Caco-2 (cell line): ENCODE measurements at regions of chrX and their contacts with region 1.

Region 1: GRCh38 chrX:132367984-132368756 is 120.7 kb downstream of the MBNL3 start:
- DNase-seq: peak; percentile 70 to 76
- H3K4me3 ChIP-seq: no peak overlapping the region
- H3K4me3 Mint-ChIP-seq: peak overlapping the region; percentile 20
- H3K27ac Mint-ChIP-seq: peak overlapping the region; percentile 85
- H3K4me1 ChIP-seq: peaks cover 50% of the 10 kb centered on the region
- H3K4me1 Mint-ChIP-seq: peaks cover 34% of the 10 kb centered on the region
- H3K27me3 ChIP-seq: no peaks in the 10 kb centered on the region
- H3K27me3 Mint-ChIP-seq: no peaks in the 10 kb centered on the region
- CTCF ChIP-seq: no peak

Region 2: GRCh38 chrX:132393992-132394391 is 25.8 kb after region 1 on chrX:
- CTCF ChIA-PET with region 1: no interaction called
- POLR2A ChIA-PET with region 1: interaction called, 4 read pairs
- intact Hi-C with region 1: loop called (anchors 1 kb)
- DNase-seq: no peak
- H3K4me3 ChIP-seq: no peak overlapping the region
- H3K4me3 Mint-ChIP-seq: no peak overlapping the region
- H3K27ac Mint-ChIP-seq: peak overlapping the region; percentile 53
- H3K4me1 ChIP-seq: peaks cover 34% of the 10 kb centered on the region
- H3K4me1 Mint-ChIP-seq: peaks cover 23% of the 10 kb centered on the region
- H3K27me3 ChIP-seq: no peaks in the 10 kb centered on the region
- H3K27me3 Mint-ChIP-seq: no peaks in the 10 kb centered on the region
- CTCF ChIP-seq: no peak

Region 3: GRCh38 chrX:132442691-132443090 is 74.5 kb after region 1 on chrX:
- CTCF ChIA-PET with region 1: no interaction called
- POLR2A ChIA-PET with region 1: no interaction called
- intact Hi-C with region 1: no loop called
- DNase-seq: no peak
- H3K4me3 ChIP-seq: no peak overlapping the region
- H3K4me3 Mint-ChIP-seq: no peak overlapping the region
- H3K27ac Mint-ChIP-seq: no peak overlapping the region
- H3K4me1 ChIP-seq: 0 out of 2 replicates have a peak, but pooled peaks cover 6% of the 10 kb centered on the region
- H3K4me1 Mint-ChIP-seq: no peaks in the 10 kb centered on the region
- H3K27me3 ChIP-seq: no peaks in the 10 kb centered on the region
- H3K27me3 Mint-ChIP-seq: no peaks in the 10 kb centered on the region
- CTCF ChIP-seq: no peak

Region 4: GRCh38 chrX:133285341-133285740 is 917.2 kb after region 1 on chrX:
- CTCF ChIA-PET with region 1: no interaction called
- POLR2A ChIA-PET with region 1: no interaction called
- intact Hi-C with region 1: no loop called
- DNase-seq: no peak
- H3K4me3 ChIP-seq: no peak overlapping the region
- H3K4me3 Mint-ChIP-seq: no peak overlapping the region
- H3K27ac Mint-ChIP-seq: no peak overlapping the region
- H3K4me1 ChIP-seq: no peaks in the 10 kb centered on the region
- H3K4me1 Mint-ChIP-seq: no peaks in the 10 kb centered on the region
- H3K27me3 ChIP-seq: no peaks in the 10 kb centered on the region
- H3K27me3 Mint-ChIP-seq: peaks cover 2% of the 10 kb centered on the region
- CTCF ChIP-seq: no peak